ENCODE measurements at regions of chr15 and their contacts with region 1.

Region 1: GRCh38 chr15:51782357-51782896 is 31.0 kb downstream of the TMOD2 start:
- DNase-seq: no peak
- ATAC-seq: no peak
- H3K4me3 Mint-ChIP-seq: no peak overlapping the region
- H3K27ac Mint-ChIP-seq: no peak overlapping the region
- H3K4me1 Mint-ChIP-seq: no peaks in the 10 kb centered on the region
- H3K27me3 Mint-ChIP-seq: no peaks in the 10 kb centered on the region
- CTCF ChIP-seq: peak; percentile 35

Region 2: DNA sequence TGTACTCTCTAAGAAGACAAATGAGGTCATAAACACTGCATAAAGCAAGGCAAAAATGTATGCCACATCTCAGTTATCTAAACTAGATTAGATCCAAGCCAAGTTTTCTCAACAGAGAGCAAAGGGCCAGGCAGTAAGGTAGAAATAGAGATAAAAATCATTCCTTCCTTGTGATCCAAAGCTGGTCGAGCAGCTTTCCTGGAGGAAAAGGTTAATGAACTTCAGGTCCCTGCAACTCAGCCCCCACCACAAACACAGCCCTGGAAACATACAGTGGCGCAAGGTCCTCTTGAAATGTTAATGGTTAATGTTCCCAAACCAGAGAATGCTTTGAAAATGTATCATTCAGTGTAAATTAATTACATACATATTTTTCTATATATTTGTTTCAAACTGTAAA is 62.2 kb before region 1 on chr15:
- CTCF ChIA-PET with region 1: no interaction called
- POLR2A ChIA-PET with region 1: no interaction called
- intact Hi-C with region 1: no loop called
- DNase-seq: no peak
- ATAC-seq: no peak
- H3K4me3 Mint-ChIP-seq: no peak overlapping the region
- H3K27ac Mint-ChIP-seq: no peak overlapping the region
- H3K4me1 Mint-ChIP-seq: peaks cover 30% of the 10 kb centered on the region
- H3K27me3 Mint-ChIP-seq: no peaks in the 10 kb centered on the region
- CTCF ChIP-seq: no peak

Region 3: DNA sequence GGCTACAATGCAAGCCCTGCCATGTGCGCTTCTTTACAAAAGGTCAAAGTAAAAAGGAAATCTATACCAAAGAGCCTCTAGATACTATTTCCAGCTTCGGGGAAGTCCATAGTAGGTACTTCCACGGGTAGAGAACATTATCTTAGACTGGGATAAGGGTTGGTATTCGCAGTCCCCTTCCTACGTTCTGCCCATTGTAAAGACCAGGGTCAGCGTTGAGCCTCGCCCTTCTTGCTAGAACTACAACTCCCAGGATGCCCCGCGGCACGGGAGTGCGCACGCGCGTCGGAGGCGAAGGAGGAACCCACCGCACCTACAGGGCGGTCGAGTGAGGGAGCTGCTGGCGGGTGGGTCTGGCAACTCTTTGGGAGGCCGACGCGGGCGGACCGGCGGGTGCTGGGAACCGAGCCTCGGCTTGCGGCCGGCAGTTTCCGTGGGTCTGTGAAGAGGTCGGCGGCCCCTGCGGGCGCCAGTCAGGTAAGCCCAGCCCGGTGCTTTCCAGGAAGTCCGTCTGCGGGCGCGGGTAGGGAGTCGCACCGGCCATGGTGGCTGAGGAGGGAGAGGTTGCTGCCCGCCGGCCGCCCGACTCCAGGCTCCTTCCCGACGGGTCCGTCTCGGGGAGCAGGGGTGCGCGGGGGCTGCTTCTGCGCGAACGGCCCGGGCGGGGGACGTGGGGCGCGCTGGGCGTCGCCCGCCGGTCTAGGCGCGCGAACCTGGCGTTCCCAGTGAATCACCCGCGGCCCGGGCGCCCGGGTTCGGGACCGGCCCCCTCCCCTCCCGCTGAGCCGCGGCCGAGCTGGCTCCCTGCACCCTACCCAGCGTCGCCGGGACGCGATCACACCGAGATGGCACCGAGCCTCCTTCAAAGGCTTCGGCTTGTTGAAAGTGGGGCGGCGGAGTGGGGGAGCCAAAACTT is 47.2 kb after region 1 on chr15 and contains the start of gene TMOD3:
- CTCF ChIA-PET with region 1: interaction called, 17 read pairs
- POLR2A ChIA-PET with region 1: no interaction called
- intact Hi-C with region 1: loop called (anchors 5 kb)
- DNase-seq: peak; percentile 92
- ATAC-seq: peak; percentile 87
- H3K4me3 Mint-ChIP-seq: peak within 1 kb of the TSS; percentile 94
- H3K27ac Mint-ChIP-seq: peak within 1 kb of the TSS; percentile 91
- H3K4me1 Mint-ChIP-seq: peaks cover 33% of the 10 kb centered on the region
- H3K27me3 Mint-ChIP-seq: no peaks in the 10 kb centered on the region
- CTCF ChIP-seq: no peak
- total RNA-seq, gene TMOD3: 53.6 to 59.2 TPM

Region 4: GRCh38 chr15:51917493-51917892 is 135.1 kb after region 1 on chr15:
- CTCF ChIA-PET with region 1: no interaction called
- POLR2A ChIA-PET with region 1: no interaction called
- intact Hi-C with region 1: no loop called
- DNase-seq: peak; percentile 28
- ATAC-seq: no peak
- H3K4me3 Mint-ChIP-seq: no peak overlapping the region
- H3K27ac Mint-ChIP-seq: no peak overlapping the region
- H3K4me1 Mint-ChIP-seq: no peaks in the 10 kb centered on the region
- H3K27me3 Mint-ChIP-seq: no peaks in the 10 kb centered on the region
- CTCF ChIP-seq: peak; percentile 18

Measured in activated CD8-positive, alpha-beta T cell treated with anti-CD3 and anti-CD28 coated beads for 36 hours (primary cell).